ENCODE measurements at regions of chr11 and their contacts with region 1.

Region 1: GRCh38 chr11:102940714-102941588 is 14.6 kb downstream of the MMP13 start:
- DNase-seq: no peak
- ATAC-seq: peak in 1 of 8 donors; percentile 44
- H3K4me3 ChIP-seq: no peak overlapping the region
- H3K27ac ChIP-seq: no peak overlapping the region
- H3K4me1 ChIP-seq: no peaks in the 10 kb centered on the region
- H3K27me3 ChIP-seq: peaks cover 0 to 14% (median 0%) of the 10 kb centered on the region in 7 donors
- CTCF ChIP-seq: peak; percentile 49 to 80 (median 76)

Region 2: DNA sequence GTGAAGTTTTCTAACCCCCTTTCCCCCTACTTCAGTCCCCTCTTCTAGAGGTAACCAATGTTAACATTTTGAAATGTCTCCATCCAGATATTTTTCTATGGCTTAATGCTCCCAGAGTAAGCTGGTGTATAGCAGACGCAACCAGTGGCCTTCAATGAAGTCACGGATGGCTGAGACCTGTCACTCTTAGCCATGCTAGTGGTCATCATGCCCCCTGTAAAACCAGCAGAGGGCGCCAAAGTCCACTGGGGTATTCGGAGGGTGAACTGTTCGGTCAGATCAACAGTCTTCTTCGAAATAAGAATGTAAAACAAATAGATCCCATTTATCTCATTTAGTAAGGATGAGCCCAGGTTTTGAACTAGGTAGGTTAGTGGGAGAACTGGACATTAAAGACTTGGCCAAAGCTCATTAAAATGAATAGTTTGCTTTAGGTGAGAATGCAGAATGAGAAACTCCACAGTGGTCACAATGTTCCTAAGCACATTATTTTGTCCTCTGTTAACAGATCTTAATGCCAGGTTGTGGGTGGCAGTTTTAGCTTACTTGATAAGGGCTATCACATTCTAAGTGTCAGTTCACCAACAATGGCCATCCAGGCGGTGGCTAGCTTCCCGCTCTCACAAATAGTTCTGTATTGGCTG is 207.6 kb before region 1 on chr11:
- intact Hi-C with region 1: loop called in 7 of 10 experiments (anchors 2 to 10 kb)
- DNase-seq: peak in 1 of 2 donors; percentile 31
- ATAC-seq: peak in 2 of 8 donors; percentile 29 to 38
- H3K4me3 ChIP-seq: no peak overlapping the region
- H3K27ac ChIP-seq: no peak overlapping the region
- H3K4me1 ChIP-seq: peaks cover 0 to 3% (median 0%) of the 10 kb centered on the region in 9 donors
- H3K27me3 ChIP-seq: peaks cover 0 to 46% (median 0%) of the 10 kb centered on the region in 7 donors
- CTCF ChIP-seq: peak; percentile 35 to 77 (median 39)

Measured in heart right ventricle (tissue), 16 donors.